CD8-positive, alpha-beta T cell (primary cell): ENCODE measurements at regions of chr20 and their contacts with region 1.

Region 1: GRCh38 chr20:354298-355064 is 7.6 kb downstream of the NRSN2 start:
- DNase-seq: peak; percentile 64 to 90 (median 80)
- ATAC-seq: peak; percentile 100
- H3K4me3 ChIP-seq: no peak overlapping the region
- H3K4me3 Mint-ChIP-seq: no peak overlapping the region
- H3K27ac ChIP-seq: no peak overlapping the region
- H3K27ac Mint-ChIP-seq: no peak overlapping the region
- H3K4me1 ChIP-seq: peaks cover 6% of the 10 kb centered on the region
- H3K4me1 Mint-ChIP-seq: no peaks in the 10 kb centered on the region
- H3K27me3 ChIP-seq: no peaks in the 10 kb centered on the region
- H3K27me3 Mint-ChIP-seq: no peaks in the 10 kb centered on the region
- CTCF ChIP-seq: peak; percentile 79

Region 2: DNA sequence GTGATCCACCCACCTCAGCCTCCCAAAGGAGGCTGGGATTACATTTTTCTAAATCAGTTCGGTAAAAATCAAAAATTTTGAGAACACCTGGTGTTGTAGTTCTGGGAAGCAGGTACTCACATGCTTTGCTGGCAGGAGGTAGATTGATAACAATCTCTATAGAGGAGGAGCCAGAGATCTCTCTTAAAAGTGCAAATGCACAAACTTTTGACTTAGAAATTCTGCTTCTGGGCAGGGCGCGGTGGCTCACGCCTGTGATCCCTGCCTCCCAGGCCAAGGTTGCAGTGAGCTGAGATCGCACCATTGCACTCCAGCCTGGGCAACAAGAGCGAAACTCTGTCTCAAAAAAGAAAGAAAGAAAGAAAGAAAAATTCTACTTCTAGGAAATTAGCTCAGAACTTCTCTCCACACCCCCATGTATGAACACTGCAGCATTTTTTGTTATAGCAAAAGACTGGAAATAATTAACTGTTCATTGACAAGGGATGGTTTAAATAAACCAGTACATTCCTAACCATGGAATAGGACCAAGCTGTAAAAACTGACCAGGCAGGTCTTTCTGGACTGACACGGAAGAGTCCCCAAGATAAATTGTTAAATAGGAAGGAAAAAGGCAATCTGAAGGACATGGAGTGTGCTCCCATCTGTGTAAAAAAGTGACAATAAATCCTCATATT is 11.7 kb after region 1 on chr20:
- CTCF ChIA-PET with region 1: interaction called, 26 read pairs
- POLR2A ChIA-PET with region 1: no interaction called
- intact Hi-C with region 1: no loop called
- DNase-seq: no peak
- ATAC-seq: no peak
- H3K4me3 ChIP-seq: no peak overlapping the region
- H3K4me3 Mint-ChIP-seq: no peak overlapping the region
- H3K27ac ChIP-seq: no peak overlapping the region
- H3K27ac Mint-ChIP-seq: no peak overlapping the region
- H3K4me1 ChIP-seq: peaks cover 6% of the 10 kb centered on the region
- H3K4me1 Mint-ChIP-seq: peaks cover 21% of the 10 kb centered on the region
- H3K27me3 ChIP-seq: no peaks in the 10 kb centered on the region
- H3K27me3 Mint-ChIP-seq: no peaks in the 10 kb centered on the region
- CTCF ChIP-seq: no peak

Region 3: DNA sequence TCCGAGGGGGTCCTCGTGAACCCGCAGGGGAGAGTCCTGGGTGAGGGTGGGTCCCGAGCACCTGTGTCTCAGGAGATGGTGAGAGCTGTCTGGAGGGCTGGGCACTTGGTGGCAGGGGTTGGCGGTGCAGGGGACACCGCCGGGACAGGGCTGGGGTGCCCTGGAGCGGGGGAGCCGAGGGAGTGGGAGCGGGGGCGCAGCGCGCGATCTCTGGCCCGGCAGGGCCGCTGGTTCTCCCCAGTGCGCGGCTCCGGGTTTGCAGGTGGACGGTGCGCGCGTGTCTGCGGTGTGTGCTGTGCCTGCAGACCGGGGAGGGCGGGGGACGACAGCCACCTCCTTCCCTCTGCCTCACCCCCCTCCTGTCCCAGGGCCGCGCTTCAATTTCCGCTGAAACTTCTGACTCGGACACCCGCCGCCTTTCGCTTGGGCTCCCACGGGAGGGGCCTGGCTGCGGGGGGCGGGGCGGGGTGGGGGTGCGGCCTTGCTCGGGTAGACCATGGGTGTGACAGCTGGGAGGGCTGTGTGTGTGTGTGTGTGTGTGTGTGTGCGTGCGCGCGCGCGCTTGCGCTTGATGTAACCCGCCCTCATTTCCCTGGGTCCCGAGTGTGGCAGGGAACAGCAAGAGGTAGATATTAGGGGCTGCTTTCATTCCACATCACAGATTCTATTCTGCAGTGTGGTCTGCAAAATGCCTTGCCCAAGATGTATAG is 27.3 kb after region 1 on chr20:
- CTCF ChIA-PET with region 1: interaction called, 7 read pairs
- POLR2A ChIA-PET with region 1: no interaction called
- intact Hi-C with region 1: loop called in 1 of 2 experiments (anchors 2 kb)
- DNase-seq: peak; percentile 35 to 87 (median 70)
- ATAC-seq: peak; percentile 67
- H3K4me3 ChIP-seq: peak overlapping the region; percentile 76 to 77
- H3K4me3 Mint-ChIP-seq: peak overlapping the region; percentile 80
- H3K27ac ChIP-seq: peak overlapping the region; percentile 27 to 48
- H3K27ac Mint-ChIP-seq: peak overlapping the region; percentile 78
- H3K4me1 ChIP-seq: no peaks in the 10 kb centered on the region
- H3K4me1 Mint-ChIP-seq: peaks cover 13% of the 10 kb centered on the region
- H3K27me3 ChIP-seq: no peaks in the 10 kb centered on the region
- H3K27me3 Mint-ChIP-seq: no peaks in the 10 kb centered on the region
- CTCF ChIP-seq: no peak

Region 4: GRCh38 chr20:431012-431904 is 76.8 kb after region 1 on chr20:
- CTCF ChIA-PET with region 1: interaction called, 15 read pairs
- POLR2A ChIA-PET with region 1: no interaction called
- intact Hi-C with region 1: loop called in 1 of 2 experiments (anchors 1 kb)
- DNase-seq: peak in 5 of 9 experiments; percentile 18 to 51 (median 32)
- ATAC-seq: no peak
- H3K4me3 ChIP-seq: no peak overlapping the region
- H3K4me3 Mint-ChIP-seq: no peak overlapping the region
- H3K27ac ChIP-seq: no peak overlapping the region
- H3K27ac Mint-ChIP-seq: no peak overlapping the region
- H3K4me1 ChIP-seq: peaks cover 19% of the 10 kb centered on the region
- H3K4me1 Mint-ChIP-seq: peaks cover 24% of the 10 kb centered on the region
- H3K27me3 ChIP-seq: no peaks in the 10 kb centered on the region
- H3K27me3 Mint-ChIP-seq: no peaks in the 10 kb centered on the region
- CTCF ChIP-seq: no peak

Region 5: GRCh38 chr20:462199-462991 is 107.9 kb after region 1 on chr20 and contains the start of gene TBC1D20:
- CTCF ChIA-PET with region 1: interaction called, 5 read pairs
- POLR2A ChIA-PET with region 1: no interaction called
- intact Hi-C with region 1: loop called (anchors 5 kb)
- DNase-seq: peak; percentile 72 to 95 (median 84)
- ATAC-seq: peak; percentile 95
- H3K4me3 ChIP-seq: peak within 1 kb of the TSS; percentile 74 to 87
- H3K4me3 Mint-ChIP-seq: peak within 1 kb of the TSS; percentile 99
- H3K27ac ChIP-seq: peak within 1 kb of the TSS; percentile 67 to 77
- H3K27ac Mint-ChIP-seq: peak within 1 kb of the TSS; percentile 96
- H3K4me1 ChIP-seq: peaks cover 30% of the 10 kb centered on the region
- H3K4me1 Mint-ChIP-seq: peaks cover 45% of the 10 kb centered on the region
- H3K27me3 ChIP-seq: no peaks in the 10 kb centered on the region
- H3K27me3 Mint-ChIP-seq: no peaks in the 10 kb centered on the region
- CTCF ChIP-seq: no peak
- total RNA-seq, gene TBC1D20: 18.5 to 20.3 TPM

Region 6: GRCh38 chr20:645318-646106 is 291.0 kb after region 1 on chr20:
- CTCF ChIA-PET with region 1: interaction called, 15 read pairs
- POLR2A ChIA-PET with region 1: no interaction called
- intact Hi-C with region 1: loop called (anchors 1 kb)
- DNase-seq: peak; percentile 31 to 74 (median 63)
- ATAC-seq: peak; percentile 89
- H3K4me3 ChIP-seq: no peak overlapping the region
- H3K4me3 Mint-ChIP-seq: no peak overlapping the region
- H3K27ac ChIP-seq: no peak overlapping the region
- H3K27ac Mint-ChIP-seq: no peak overlapping the region
- H3K4me1 ChIP-seq: peaks cover 6% of the 10 kb centered on the region
- H3K4me1 Mint-ChIP-seq: peaks cover 14% of the 10 kb centered on the region
- H3K27me3 ChIP-seq: no peaks in the 10 kb centered on the region
- H3K27me3 Mint-ChIP-seq: peaks cover 23% of the 10 kb centered on the region
- CTCF ChIP-seq: peak; percentile 95